Heart left ventricle (tissue), 16 donors: ENCODE measurements at regions of chr1 and their contacts with region 1.

Region 1: DNA sequence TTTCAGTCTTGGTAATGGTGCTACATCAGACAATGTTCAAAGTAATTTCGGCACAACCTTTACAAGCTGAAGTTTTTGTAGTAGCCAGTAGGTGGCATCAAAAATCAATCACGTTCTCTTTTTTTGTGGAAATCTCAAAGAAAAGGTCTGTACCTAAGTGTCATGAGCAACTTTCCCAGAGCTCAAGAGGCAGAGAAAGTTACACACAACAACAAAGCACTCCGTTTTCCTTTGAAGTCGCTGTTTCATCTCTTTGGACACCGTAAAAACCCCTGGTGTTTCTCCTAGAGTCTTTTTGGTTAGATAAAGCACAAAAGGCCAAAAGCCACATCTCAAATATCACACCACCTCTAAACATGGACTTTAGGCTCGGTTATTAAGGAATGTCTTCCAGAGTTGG is 131.6 kb downstream of the LHX8 start:
- DNase-seq: no peak
- ATAC-seq: peak in 1 of 4 donors; percentile 47
- H3K4me3 ChIP-seq: no peak overlapping the region
- H3K27ac ChIP-seq: no peak overlapping the region
- H3K4me1 ChIP-seq: no peaks in the 10 kb centered on the region
- H3K27me3 ChIP-seq: no peaks in the 10 kb centered on the region
- CTCF ChIP-seq: peak; percentile 27 to 65 (median 46)
- POLR2A ChIP-seq: no peak

Region 2: DNA sequence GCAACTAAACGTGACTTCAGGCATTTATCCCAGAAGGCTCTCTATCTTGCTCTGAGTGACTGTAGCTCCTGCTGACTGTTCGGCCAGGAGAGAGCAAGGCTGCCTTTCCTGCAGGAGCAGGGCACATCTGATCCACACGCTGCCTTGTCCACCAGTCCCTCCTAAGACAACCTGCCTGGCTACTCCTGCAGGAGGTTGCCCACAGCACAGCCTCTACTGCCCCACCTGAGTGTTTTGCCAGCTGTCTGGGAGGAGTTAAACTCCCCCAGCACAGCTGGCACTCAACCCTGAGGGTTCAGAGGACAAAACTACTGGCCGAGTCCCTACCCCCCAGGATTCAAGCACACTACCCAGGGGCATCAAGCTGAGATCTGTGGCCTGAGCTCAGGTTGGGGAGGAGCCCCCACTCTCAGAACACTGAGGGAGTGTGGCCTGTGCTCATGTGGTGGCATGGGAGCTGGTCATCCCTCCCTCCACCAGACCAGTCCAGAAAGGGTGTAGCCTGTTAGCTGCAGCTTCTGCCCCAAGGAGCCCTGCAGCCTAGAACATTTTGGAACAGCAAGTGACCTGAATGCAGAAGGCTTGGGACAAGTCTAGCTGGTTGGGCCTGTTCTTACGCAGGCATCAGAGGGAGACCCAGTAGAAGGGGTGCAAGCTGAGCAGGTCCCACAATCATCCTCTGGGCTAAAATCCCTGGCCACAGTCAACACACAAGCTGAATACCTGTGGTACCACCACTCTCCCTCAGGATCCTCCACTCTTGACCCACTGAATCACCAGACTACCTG is 107.9 kb after region 1 on chr1:
- intact Hi-C with region 1: loop called in 1 of 10 experiments (anchors 10 kb)
- DNase-seq: no peak
- ATAC-seq: peak in 1 of 4 donors; percentile 24
- H3K4me3 ChIP-seq: no peak overlapping the region
- H3K27ac ChIP-seq: no peak overlapping the region
- H3K4me1 ChIP-seq: no peaks in the 10 kb centered on the region
- H3K27me3 ChIP-seq: no peaks in the 10 kb centered on the region
- CTCF ChIP-seq: no peak
- POLR2A ChIP-seq: no peak

Region 3: GRCh38 chr1:75438355-75438754 is 172.6 kb after region 1 on chr1:
- intact Hi-C with region 1: no loop called
- DNase-seq: no peak
- ATAC-seq: no peak
- H3K4me3 ChIP-seq: no peak overlapping the region
- H3K27ac ChIP-seq: no peak overlapping the region
- H3K4me1 ChIP-seq: no peaks in the 10 kb centered on the region
- H3K27me3 ChIP-seq: no peaks in the 10 kb centered on the region
- CTCF ChIP-seq: no peak
- POLR2A ChIP-seq: no peak

Region 4: DNA sequence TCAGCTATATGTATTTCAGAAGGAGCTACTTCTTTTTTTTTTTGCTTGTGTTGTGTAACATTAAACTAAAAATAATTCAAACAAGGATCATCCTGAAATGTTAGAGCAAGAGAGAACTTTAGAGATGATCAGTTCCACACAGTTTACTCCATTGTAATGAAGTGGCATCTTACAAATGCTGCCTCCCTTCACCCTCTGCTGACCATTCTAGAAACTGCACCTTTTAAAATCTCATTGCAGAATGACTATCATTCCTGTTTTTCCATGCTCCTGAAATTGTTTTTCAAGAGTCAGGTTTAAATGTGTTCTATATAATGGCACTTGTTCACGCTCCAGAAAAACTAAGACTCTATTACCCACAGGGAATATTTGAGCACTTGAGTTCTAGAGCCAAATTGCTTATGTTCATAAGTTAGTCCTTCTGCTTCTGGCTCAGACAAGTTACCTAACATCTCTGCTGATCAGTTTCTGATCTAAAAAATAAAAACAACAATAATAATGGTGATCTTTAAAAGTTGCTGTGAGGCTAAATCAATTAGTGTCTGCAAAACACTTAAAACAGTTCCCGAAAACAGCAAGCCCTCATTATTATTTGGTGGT is 366.7 kb after region 1 on chr1:
- intact Hi-C with region 1: loop called in 9 of 10 experiments (anchors 2 to 10 kb)
- DNase-seq: no peak
- ATAC-seq: peak in 1 of 4 donors; percentile 58
- H3K4me3 ChIP-seq: no peak overlapping the region
- H3K27ac ChIP-seq: no peak overlapping the region
- H3K4me1 ChIP-seq: no peaks in the 10 kb centered on the region
- H3K27me3 ChIP-seq: peaks cover 0 to 9% (median 0%) of the 10 kb centered on the region in 9 donors
- CTCF ChIP-seq: peak; percentile 49 to 76 (median 65)
- POLR2A ChIP-seq: no peak